ENCODE measurements at regions of chr12 and their contacts with region 1.

Region 1: DNA sequence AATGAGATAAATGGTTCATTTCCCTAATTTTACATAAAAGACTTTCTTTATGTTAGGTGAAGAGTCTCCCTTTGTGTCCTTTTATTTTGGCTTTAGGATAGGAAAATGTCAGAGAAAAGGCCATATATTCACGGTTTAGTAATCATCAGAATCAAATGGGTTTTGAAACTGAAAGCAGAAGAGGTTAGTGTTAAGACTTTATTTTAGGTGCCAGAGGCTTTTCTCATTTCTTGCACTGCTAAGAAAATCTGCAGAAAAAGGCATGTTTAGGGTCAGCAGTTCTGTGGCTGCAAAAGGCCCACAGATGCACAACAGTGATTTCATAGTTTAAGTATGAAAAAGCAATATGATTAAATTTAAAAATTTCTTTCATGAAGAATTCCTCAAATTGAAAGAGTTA is 80.4 kb upstream of the SINHCAF start:
- DNase-seq: no peak
- ATAC-seq: no peak
- H3K4me3 ChIP-seq: no peak overlapping the region
- H3K27ac ChIP-seq: no peak overlapping the region
- H3K4me1 ChIP-seq: no peaks in the 10 kb centered on the region
- H3K27me3 ChIP-seq: no peaks in the 10 kb centered on the region
- CTCF ChIP-seq: no peak

Region 2: GRCh38 chr12:31634620-31635019 is 228.3 kb after region 1 on chr12:
- intact Hi-C with region 1: loop called in 2 of 3 experiments (anchors 5 kb)
- DNase-seq: no peak
- ATAC-seq: no peak
- H3K4me3 ChIP-seq: no peak overlapping the region
- H3K27ac ChIP-seq: no peak overlapping the region
- H3K4me1 ChIP-seq: peaks cover 0 to 11% (median 2%) of the 10 kb centered on the region in 3 donors
- H3K27me3 ChIP-seq: no peaks in the 10 kb centered on the region
- CTCF ChIP-seq: no peak